GM12878 (cell line): ENCODE measurements at regions of chr13 and their contacts with region 1.

Region 1: DNA sequence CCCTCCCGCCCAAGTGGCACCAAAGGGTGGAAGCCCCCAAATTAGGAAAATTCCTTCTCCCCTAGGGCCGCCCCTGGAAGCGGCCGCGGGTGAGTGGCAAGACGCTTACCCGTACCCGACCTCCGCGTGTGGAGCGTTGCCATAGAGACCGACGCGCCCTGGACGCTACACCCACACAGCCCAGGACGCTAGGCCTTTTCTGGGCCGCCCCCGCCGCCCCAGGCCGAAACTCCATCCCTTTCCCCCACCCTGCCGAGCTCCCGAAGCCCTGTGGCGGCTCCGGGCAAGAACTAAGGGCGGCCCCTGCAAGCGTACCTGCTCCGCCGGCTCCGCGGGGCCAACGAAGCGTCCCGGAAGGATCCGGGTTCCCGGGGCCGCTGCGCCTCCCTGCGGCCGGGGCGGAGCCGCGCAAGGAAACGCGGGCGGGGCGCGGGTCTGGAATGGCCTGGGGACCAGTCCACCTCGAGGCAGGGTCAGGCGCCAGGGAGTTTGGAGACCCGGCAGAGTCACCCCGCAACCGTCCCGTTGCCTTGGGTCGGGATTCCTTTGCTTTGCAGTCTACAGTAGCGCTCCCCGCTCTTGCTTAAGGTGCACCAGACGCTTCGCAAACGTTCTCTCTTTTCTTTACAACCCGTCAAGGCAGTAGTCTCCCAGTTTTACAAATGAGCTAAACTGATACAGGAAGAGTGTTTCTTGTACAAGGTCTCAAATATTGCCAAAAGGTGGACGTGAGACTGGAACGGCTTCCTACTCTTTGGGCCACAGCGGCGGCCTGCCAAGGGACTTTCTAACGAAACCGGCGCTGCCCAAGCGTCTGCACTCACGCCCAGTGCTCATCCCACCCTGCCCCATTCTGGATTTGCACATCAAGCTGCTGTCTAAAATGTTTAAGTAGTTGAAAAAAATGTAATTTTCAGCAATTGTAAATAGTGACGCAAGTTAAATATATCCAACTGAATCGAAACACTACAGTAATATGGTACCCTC is at the start of gene NEK5:
- DNase-seq: no peak
- ATAC-seq: peak; percentile 86
- H3K4me3 ChIP-seq: peak within 1 kb of the TSS; percentile 65
- H3K27ac ChIP-seq: no peak within 1 kb of the TSS
- H3K4me1 ChIP-seq: 0 out of 2 replicates have a peak, but pooled peaks cover 5% of the 10 kb centered on the region
- H3K27me3 ChIP-seq: peaks cover 2% of the 10 kb centered on the region in 2 experiments; a peak in 2 of 4 replicates
- CTCF ChIP-seq: peak; percentile 56 to 70 (median 57); a peak in 5 of 6 replicates
- EP300 ChIP-seq: no peak
- POLR2A ChIP-seq: no peak
- RAD21 ChIP-seq: peak; percentile 50
- polyA plus RNA-seq, gene NEK5: 0.04 to 0.16 TPM

Region 2: GRCh38 chr13:51844862-51845573 is 284.0 kb before region 1 on chr13 and contains the start of gene TMEM272:
- CTCF ChIA-PET with region 1: interaction called, 5 read pairs
- POLR2A ChIA-PET with region 1: no interaction called
- RAD21 ChIA-PET with region 1: no interaction called
- SMC1A ChIA-PET with region 1: no interaction called
- in situ Hi-C with region 1: no loop called
- intact Hi-C with region 1: loop called (anchors 1 kb)
- DNase-seq: no peak
- ATAC-seq: peak; percentile 81
- H3K4me3 ChIP-seq: no peak within 1 kb of the TSS
- H3K27ac ChIP-seq: no peak within 1 kb of the TSS
- H3K4me1 ChIP-seq: no peaks in the 10 kb centered on the region
- H3K27me3 ChIP-seq: peaks cover 0 to 3% of the 10 kb centered on the region in 2 experiments; a peak in 2 of 4 replicates
- CTCF ChIP-seq: peak; percentile 63 to 93 (median 90)
- EP300 ChIP-seq: no peak
- POLR2A ChIP-seq: no peak
- RAD21 ChIP-seq: peak; percentile 47
- polyA plus RNA-seq, gene TMEM272: not detected

Region 3: GRCh38 chr13:51895906-51896888 is 232.8 kb before region 1 on chr13:
- CTCF ChIA-PET with region 1: interaction called, 62 read pairs
- POLR2A ChIA-PET with region 1: no interaction called
- RAD21 ChIA-PET with region 1: interaction called, 17 read pairs
- SMC1A ChIA-PET with region 1: interaction called, 11 read pairs
- in situ Hi-C with region 1: no loop called
- intact Hi-C with region 1: loop called (anchors 1 kb)
- DNase-seq: no peak
- ATAC-seq: peak; percentile 99
- H3K4me3 ChIP-seq: no peak overlapping the region
- H3K27ac ChIP-seq: no peak overlapping the region
- H3K4me1 ChIP-seq: no peaks in the 10 kb centered on the region
- H3K27me3 ChIP-seq: peaks cover 1 to 4% of the 10 kb centered on the region in 2 experiments; a peak in 2 of 4 replicates
- CTCF ChIP-seq: peak; percentile 78 to 84 (median 83)
- EP300 ChIP-seq: no peak
- POLR2A ChIP-seq: no peak
- RAD21 ChIP-seq: peak; percentile 81

Region 4: DNA sequence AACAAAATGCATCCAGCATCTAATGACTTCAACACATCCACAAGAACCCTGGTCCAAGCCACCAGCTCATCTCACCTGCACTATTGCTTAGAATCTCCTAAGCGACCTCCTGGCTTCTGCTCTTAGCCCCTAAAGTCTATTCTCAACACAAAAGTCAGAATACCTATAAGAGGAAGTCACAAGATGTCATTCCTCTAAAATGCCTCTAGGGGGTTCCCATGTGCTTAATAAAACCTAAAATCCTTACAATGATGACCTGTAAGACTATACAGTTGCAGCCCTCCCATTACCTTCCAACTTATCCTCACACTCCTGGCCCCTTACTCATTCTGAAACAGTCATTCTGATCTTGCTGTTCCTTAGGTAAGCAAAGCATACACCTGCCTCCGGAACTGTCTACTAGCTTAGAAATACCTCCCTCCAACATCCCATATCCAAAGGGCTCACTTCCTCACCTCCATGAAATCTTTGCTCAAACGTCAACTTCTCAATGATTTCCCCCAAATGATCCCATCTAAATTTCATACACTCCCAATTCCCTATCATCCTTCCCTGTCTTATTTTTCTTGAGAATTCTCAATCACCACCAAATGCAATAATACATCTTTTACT is 127.8 kb before region 1 on chr13:
- CTCF ChIA-PET with region 1: interaction called, 36 read pairs
- POLR2A ChIA-PET with region 1: no interaction called
- RAD21 ChIA-PET with region 1: interaction called, 6 read pairs
- SMC1A ChIA-PET with region 1: interaction called, 7 read pairs
- in situ Hi-C with region 1: no loop called
- intact Hi-C with region 1: loop called (anchors 1 kb)
- DNase-seq: no peak
- ATAC-seq: peak; percentile 92
- H3K4me3 ChIP-seq: no peak overlapping the region
- H3K27ac ChIP-seq: no peak overlapping the region
- H3K4me1 ChIP-seq: no peaks in the 10 kb centered on the region
- H3K27me3 ChIP-seq: peaks cover 2 to 7% of the 10 kb centered on the region in 2 experiments; a peak in 3 of 4 replicates
- CTCF ChIP-seq: peak; percentile 68 to 72 (median 70)
- EP300 ChIP-seq: no peak
- POLR2A ChIP-seq: no peak
- RAD21 ChIP-seq: peak; percentile 73

Region 5: DNA sequence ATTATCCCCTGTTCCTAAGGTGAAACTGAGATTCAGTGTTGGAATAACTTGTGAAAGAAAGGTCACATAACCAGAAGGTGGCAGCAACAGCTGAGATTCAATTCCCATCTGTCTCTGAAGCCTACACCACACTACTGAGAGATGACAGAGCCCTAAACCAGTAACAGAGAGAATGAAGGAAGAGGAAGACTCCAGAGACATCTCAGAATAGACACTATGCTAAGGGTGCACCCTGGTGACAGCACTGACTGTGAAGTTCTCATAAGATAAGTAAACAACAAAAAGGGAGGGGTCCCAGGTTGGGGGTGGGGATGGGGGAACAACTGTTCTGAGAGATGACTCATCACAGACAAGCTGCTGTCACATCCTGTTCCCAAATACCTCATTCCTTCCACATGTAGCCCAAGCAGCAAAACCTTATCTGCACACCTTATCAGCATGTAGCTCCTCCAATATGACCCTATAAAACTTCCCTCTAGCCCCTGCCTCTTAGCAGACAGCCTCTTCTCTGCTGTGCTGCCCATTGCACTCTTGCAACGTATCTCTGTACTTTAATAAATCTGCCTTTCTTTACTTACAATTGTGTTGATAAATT is 58.0 kb before region 1 on chr13:
- CTCF ChIA-PET with region 1: interaction called, 11 read pairs
- POLR2A ChIA-PET with region 1: no interaction called
- RAD21 ChIA-PET with region 1: no interaction called
- SMC1A ChIA-PET with region 1: no interaction called
- in situ Hi-C with region 1: no loop called
- intact Hi-C with region 1: no loop called
- DNase-seq: no peak
- ATAC-seq: no peak; the same call in 2 of the 3 replicates
- H3K4me3 ChIP-seq: no peak overlapping the region
- H3K27ac ChIP-seq: no peak overlapping the region
- H3K4me1 ChIP-seq: no peaks in the 10 kb centered on the region
- H3K27me3 ChIP-seq: no peaks in the 10 kb centered on the region
- CTCF ChIP-seq: peak in 2 of 3 experiments; percentile 2 to 14; a peak in 1 of 6 replicates
- EP300 ChIP-seq: no peak
- POLR2A ChIP-seq: no peak
- RAD21 ChIP-seq: 0 out of 2 replicates have a peak, but pooled peaks have one; percentile 11